Activated naive CD4-positive, alpha-beta T cell treated with anti-CD3 and anti-CD28 coated beads for 36 hours (primary cell): ENCODE measurements at regions of chr3 and their contacts with region 1.

Region 1: DNA sequence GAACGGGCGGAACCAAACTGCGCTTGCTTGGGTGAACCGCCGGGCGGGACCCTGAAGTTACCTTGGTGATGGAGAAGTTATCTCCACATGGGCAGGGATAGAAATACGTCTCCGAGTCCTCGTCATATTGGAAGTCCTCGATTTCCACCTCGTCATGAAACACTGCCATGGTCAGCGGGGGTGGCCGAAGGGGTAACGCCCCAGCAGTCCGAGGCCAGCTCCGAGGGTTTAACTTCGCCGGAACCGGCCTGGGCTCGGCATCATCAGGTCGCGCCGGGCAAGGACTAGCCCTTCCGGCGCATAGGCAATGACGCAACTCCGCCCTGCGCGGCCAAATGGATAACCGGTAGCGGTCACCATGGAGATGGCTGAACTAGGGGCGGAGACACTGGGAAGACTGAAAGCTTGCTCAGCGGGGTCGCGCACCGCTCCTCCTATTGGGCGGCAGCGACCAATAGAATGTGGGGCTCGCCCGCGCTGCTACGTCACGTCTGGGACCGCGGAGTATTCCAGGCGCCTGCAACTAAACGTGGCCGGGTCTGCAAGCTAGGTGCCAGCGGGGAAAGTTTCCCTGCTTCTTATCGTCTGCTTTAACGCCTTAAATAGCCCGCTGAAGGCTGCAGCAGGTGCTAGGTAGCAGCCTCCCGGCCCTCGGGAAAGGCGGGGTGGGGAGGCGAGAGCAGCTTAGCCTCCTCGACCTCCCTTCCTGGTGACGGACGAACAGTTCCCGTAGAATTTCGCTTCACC is at the starts of genes DPH3 and OXNAD1:
- DNase-seq: peak; percentile 100
- H3K4me3 Mint-ChIP-seq: peak within 1 kb of the TSS; percentile 96
- H3K27ac Mint-ChIP-seq: peak within 1 kb of the TSS; percentile 94
- H3K4me1 Mint-ChIP-seq: peaks cover 31% of the 10 kb centered on the region
- H3K27me3 Mint-ChIP-seq: no peaks in the 10 kb centered on the region
- total RNA-seq, gene DPH3: 16.1 to 17.0 TPM
- total RNA-seq, gene OXNAD1: 32.4 to 34.2 TPM

Region 2: GRCh38 chr3:15964605-15965442 is 300.1 kb before region 1 on chr3:
- CTCF ChIA-PET with region 1: no interaction called
- intact Hi-C with region 1: no loop called
- DNase-seq: no peak
- H3K4me3 Mint-ChIP-seq: no peak overlapping the region
- H3K27ac Mint-ChIP-seq: no peak overlapping the region
- H3K4me1 Mint-ChIP-seq: no peaks in the 10 kb centered on the region
- H3K27me3 Mint-ChIP-seq: no peaks in the 10 kb centered on the region

Region 3: DNA sequence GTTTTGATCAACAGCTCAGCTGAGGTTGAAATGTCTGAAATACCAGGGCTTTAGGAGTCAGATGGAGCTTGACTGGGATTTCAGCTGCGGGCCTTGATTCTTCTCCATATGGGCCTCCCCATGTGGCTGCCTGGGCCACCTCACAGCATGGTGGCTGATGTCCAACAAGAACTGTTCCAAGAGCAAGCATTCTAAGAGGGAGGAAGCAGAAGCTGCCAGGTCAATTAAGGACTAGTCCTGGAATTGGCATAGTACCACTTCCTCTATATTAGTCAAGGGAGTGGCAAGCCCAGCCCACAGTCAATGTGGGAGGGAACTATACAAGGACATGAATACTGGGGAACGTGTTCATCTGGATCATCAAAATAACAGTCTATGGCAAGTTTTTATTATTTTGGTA is 285.4 kb before region 1 on chr3:
- CTCF ChIA-PET with region 1: no interaction called
- intact Hi-C with region 1: no loop called
- DNase-seq: no peak
- H3K4me3 Mint-ChIP-seq: no peak overlapping the region
- H3K27ac Mint-ChIP-seq: no peak overlapping the region
- H3K4me1 Mint-ChIP-seq: no peaks in the 10 kb centered on the region
- H3K27me3 Mint-ChIP-seq: peaks cover 3% of the 10 kb centered on the region

Region 4: GRCh38 chr3:16280671-16281070 is 15.8 kb after region 1 on chr3:
- CTCF ChIA-PET with region 1: interaction called, 44 read pairs
- intact Hi-C with region 1: no loop called
- DNase-seq: no peak
- H3K4me3 Mint-ChIP-seq: no peak overlapping the region
- H3K27ac Mint-ChIP-seq: no peak overlapping the region
- H3K4me1 Mint-ChIP-seq: peaks cover 29% of the 10 kb centered on the region
- H3K27me3 Mint-ChIP-seq: no peaks in the 10 kb centered on the region

Region 5: DNA sequence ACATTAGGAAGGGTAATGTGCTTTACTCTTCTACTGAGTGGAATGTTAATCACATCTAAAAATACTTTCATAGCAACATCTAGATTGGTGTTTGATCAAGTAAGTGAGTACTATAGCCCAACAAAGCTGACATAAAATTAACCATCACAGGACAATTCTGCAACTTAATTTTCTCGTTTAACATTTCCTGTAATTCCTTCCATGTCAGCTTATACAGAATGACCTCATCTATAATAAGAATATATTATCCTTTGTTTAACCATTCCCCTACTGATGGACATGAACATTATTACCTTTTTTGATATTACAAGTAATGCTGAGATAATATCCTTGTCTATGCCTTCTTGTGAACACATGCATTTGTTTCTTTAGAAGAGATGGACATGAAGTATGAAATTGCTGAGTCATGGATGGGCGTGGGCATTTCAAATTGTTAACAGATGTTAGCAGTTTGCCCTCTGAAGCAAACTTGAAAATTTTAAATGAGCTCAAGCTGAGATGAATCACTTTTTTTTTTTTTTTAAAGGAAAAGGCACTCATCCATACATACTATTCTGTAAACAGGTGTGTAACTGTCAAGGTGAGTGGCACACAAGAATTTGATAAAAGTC is 85.2 kb after region 1 on chr3:
- CTCF ChIA-PET with region 1: interaction called, 10 read pairs
- intact Hi-C with region 1: no loop called
- DNase-seq: no peak
- H3K4me3 Mint-ChIP-seq: no peak overlapping the region
- H3K27ac Mint-ChIP-seq: peak overlapping the region; percentile 68
- H3K4me1 Mint-ChIP-seq: peaks cover 42% of the 10 kb centered on the region
- H3K27me3 Mint-ChIP-seq: no peaks in the 10 kb centered on the region